ENCODE measurements at regions of chr18 and their contacts with region 1.

Region 1: GRCh38 chr18:3447895-3448837 is 1.8 kb upstream of the TGIF1 start:
- DNase-seq: peak; percentile 96 to 97
- H3K4me3 ChIP-seq: peak overlapping the region; percentile 58
- H3K4me1 ChIP-seq: peaks cover 13% of the 10 kb centered on the region
- H3K27me3 ChIP-seq: no peaks in the 10 kb centered on the region

Region 2: DNA sequence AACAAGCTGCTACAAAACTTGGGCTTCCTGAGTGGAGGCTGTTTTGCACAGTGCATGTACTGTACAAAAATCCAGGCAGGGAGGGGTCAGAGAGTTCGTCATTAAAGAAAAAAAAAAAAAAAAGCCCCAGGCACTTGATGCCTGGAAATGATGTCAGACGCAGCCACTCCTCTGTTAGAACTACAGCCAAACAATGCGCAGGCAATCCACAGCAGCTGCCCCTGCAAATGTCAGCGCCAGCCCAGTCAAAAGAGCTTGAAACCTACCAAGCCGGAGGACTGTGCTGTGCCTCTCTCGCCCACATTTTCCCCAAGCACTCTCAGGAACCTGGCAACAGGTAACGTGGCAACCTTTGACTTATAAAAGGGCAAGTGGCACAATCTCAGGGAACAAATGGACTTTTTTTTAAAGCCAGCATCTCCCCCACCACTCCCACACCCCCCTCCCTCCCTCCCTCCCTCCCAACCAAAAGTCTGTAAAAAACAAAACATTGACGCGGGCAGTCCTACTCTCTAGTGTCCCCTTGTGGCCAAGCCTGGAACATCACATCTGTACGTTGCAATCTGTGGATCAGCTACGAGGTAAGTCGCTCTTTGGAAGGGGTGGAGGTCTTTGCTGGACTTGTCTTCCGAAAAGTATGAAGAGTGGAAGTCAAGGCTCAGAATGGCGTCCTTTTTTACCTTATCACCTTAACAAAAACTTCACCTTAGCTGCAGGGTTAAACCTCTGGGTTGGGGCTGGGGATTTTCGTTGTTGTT is 145.9 kb after region 1 on chr18:
- in situ Hi-C with region 1: loop called (anchors 5 kb)
- DNase-seq: peak; percentile 90 to 93
- H3K4me3 ChIP-seq: peak overlapping the region; percentile 25
- H3K4me1 ChIP-seq: peaks cover 34% of the 10 kb centered on the region
- H3K27me3 ChIP-seq: no peaks in the 10 kb centered on the region

Region 3: DNA sequence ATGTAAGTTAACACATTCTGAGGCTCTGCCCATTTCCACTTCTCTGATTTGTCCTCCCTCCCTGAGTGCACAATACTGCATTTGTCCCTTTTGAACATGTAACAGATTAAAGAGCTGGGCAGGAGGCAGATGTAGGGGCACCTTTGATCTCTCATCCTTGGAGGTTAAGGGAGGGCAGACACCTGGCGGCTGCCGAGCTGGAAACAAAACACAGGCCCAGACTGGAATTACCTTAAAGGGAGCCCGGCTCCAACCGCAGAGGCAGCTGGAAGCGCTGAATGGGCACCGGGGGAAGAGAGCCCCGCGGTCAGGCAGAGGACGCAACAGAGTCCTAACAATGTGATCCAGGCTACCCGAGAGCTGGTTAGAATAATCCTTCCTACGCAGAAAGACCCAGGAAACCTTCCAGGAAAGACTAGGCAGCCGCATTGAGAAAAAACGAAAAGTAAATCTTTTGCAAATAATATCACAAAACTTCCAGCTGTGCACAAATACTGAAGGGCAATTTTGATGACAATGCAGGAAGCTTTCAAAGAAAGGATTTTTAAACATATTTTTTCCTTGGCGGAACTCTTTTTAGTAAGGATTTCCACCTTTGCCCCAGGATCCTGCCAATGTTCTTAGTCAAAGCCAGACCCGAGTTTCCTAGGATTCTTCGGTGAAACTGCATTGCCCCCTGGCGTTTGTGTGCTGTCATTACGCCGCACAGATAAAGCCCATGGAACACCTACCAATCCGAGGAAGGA is 217.8 kb after region 1 on chr18:
- in situ Hi-C with region 1: loop called (anchors 10 kb)
- DNase-seq: peak; percentile 81 to 86
- H3K4me3 ChIP-seq: no peak overlapping the region
- H3K4me1 ChIP-seq: peaks cover 10% of the 10 kb centered on the region
- H3K27me3 ChIP-seq: no peaks in the 10 kb centered on the region

Region 4: GRCh38 chr18:3782901-3783300 is 334.7 kb after region 1 on chr18:
- in situ Hi-C with region 1: no loop called
- DNase-seq: no peak
- H3K4me3 ChIP-seq: no peak overlapping the region
- H3K4me1 ChIP-seq: no peaks in the 10 kb centered on the region
- H3K27me3 ChIP-seq: no peaks in the 10 kb centered on the region

Measured in HAP-1 (cell line).